Activated CD4-positive, alpha-beta memory T cell treated with anti-CD3 and anti-CD28 coated beads, Interleukin-2, amount 10 ng/mL, durations not matched to agents 7 days and 5 days (primary cell): ENCODE measurements at regions of chr11 and their contacts with region 1.

Region 1: DNA sequence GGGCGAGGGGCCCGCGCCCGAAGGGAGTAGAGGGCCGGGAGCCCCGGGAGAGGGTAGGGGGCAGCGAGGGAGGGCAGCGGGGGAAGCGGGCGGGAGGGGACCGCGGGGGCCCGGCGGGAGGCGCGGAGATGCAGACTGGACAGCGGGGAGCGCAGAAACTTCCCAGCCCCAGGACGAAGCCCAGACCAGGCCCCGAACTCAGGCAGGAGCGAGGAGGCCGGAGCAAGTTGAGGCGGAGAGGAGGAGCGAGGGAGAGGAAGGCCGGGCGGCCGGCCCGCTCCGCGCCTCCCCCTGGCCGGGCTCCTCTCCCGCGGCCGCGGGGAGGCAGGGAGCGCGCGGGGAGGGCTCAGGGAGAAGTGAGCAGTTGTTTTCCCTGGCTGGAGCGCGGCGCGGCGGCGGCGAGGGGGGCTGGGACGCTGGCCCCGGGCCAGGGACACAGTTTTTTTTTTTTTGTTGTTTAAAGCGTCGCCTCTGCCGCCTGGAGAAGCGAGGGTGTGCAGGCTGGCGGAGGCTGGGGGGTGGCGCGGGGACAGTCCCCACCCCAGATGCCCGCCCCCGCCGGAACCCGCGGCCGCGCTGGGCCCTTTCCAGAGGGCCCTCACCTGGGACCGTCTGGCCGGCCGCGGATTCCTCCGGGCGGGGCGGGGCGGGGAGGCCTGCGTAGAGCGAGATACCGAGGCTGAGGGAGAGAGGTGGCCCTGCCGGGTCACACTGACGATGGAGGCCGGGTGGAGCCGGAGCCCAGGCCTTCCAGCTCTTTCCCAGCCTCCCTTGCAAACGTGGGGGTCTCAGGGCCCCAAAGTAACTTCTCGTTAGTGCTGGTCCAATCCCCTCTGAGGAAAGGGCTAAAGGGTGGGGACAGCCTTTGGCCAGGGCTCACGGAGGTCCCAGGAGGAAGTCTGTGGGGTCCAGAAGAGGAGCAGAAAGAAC is at the start of gene LTBP3:
- DNase-seq: no peak
- H3K4me3 Mint-ChIP-seq: peak within 1 kb of the TSS; percentile 74
- H3K27ac Mint-ChIP-seq: peak within 1 kb of the TSS; percentile 74
- H3K4me1 Mint-ChIP-seq: peaks cover 56% of the 10 kb centered on the region
- H3K27me3 Mint-ChIP-seq: no peaks in the 10 kb centered on the region
- total RNA-seq, gene LTBP3: 55.4 to 60.0 TPM

Region 2: GRCh38 chr11:65546217-65546958 is 11.9 kb before region 1 on chr11:
- CTCF ChIA-PET with region 1: interaction called, 41 read pairs
- POLR2A ChIA-PET with region 1: interaction called, 19 read pairs
- DNase-seq: peak; percentile 98
- H3K4me3 Mint-ChIP-seq: peak overlapping the region; percentile 73
- H3K27ac Mint-ChIP-seq: peak overlapping the region; percentile 82
- H3K4me1 Mint-ChIP-seq: peaks cover 51% of the 10 kb centered on the region
- H3K27me3 Mint-ChIP-seq: no peaks in the 10 kb centered on the region

Region 3: GRCh38 chr11:65575568-65576231 is 17.4 kb after region 1 on chr11 and contains the start of gene EHBP1L1:
- CTCF ChIA-PET with region 1: interaction called, 14 read pairs
- POLR2A ChIA-PET with region 1: interaction called, 31 read pairs
- DNase-seq: peak; percentile 87
- H3K4me3 Mint-ChIP-seq: peak within 1 kb of the TSS; percentile 88
- H3K27ac Mint-ChIP-seq: peak within 1 kb of the TSS; percentile 97
- H3K4me1 Mint-ChIP-seq: peaks cover 57% of the 10 kb centered on the region
- H3K27me3 Mint-ChIP-seq: no peaks in the 10 kb centered on the region
- total RNA-seq, gene EHBP1L1: 118 to 119 TPM

Region 4: GRCh38 chr11:65817835-65818742 is 259.8 kb after region 1 on chr11:
- CTCF ChIA-PET with region 1: no interaction called
- POLR2A ChIA-PET with region 1: no interaction called
- DNase-seq: peak; percentile 94
- H3K4me3 Mint-ChIP-seq: peak overlapping the region; percentile 74
- H3K27ac Mint-ChIP-seq: peak overlapping the region; percentile 65
- H3K4me1 Mint-ChIP-seq: peaks cover 17% of the 10 kb centered on the region
- H3K27me3 Mint-ChIP-seq: peaks cover 17% of the 10 kb centered on the region

Region 5: GRCh38 chr11:65911682-65912568 is 353.7 kb after region 1 on chr11:
- CTCF ChIA-PET with region 1: no interaction called
- POLR2A ChIA-PET with region 1: no interaction called
- DNase-seq: no peak
- H3K4me3 Mint-ChIP-seq: no peak overlapping the region
- H3K27ac Mint-ChIP-seq: no peak overlapping the region
- H3K4me1 Mint-ChIP-seq: peaks cover 23% of the 10 kb centered on the region
- H3K27me3 Mint-ChIP-seq: peaks cover 3% of the 10 kb centered on the region